ENCODE measurements at regions of chr4 and their contacts with region 1.

Region 1: DNA sequence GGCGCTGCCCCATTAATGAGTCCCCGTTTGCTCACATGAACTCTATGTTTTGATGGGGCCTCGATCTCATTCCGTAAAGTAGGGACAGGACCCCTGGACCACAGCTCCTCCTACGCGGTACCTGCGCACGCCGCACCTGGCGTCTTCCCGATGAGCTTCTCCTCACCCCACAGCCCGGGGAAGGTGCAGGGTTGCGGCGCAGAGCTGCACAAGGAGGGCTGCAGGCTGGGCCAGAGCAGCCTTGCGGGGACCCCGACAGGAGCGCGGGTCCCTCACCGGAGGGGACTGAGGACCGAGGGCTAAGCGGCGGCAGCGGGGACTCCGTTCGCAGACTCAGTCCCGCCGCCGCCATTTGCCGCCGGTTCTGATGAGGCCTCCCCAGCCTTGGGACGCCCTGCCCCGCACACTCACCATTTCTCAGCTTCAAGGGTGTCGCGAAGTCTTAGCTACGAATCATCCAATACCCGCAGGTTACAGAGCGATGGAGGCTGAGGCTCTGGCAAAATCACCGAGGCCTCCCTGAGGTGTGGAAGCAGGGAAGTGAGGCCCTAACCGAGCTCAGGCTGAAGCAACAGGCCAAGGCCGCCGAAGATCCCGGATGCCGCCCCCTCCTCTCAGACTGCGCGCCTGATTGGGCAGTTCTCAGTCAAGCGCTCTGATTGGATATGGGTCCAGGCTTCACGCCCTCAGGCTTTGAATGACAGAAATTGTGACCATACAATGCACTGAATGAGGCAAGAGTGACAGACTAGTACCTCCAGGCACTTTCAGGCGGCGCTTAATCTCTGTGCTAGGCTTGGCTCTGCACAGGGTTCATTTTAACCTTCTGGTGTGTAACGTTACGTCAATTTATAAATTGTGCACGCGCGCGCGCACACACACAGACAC is 25.1 kb downstream of the ZNF721 start:
- DNase-seq: peak; percentile 80
- ATAC-seq: peak; percentile 98
- H3K4me3 Mint-ChIP-seq: peak overlapping the region; percentile 99
- H3K27ac Mint-ChIP-seq: peak overlapping the region; percentile 99
- H3K4me1 Mint-ChIP-seq: peaks cover 37% of the 10 kb centered on the region
- H3K27me3 Mint-ChIP-seq: no peaks in the 10 kb centered on the region
- CTCF ChIP-seq: no peak

Region 2: GRCh38 chr4:498328-498904 is 24.6 kb after region 1 on chr4:
- CTCF ChIA-PET with region 1: no interaction called
- POLR2A ChIA-PET with region 1: interaction called, 20 read pairs
- intact Hi-C with region 1: loop called (anchors 1 kb)
- DNase-seq: no peak
- ATAC-seq: peak; percentile 25
- H3K4me3 Mint-ChIP-seq: peak overlapping the region; percentile 93
- H3K27ac Mint-ChIP-seq: peak overlapping the region; percentile 95
- H3K4me1 Mint-ChIP-seq: peaks cover 32% of the 10 kb centered on the region
- H3K27me3 Mint-ChIP-seq: no peaks in the 10 kb centered on the region
- CTCF ChIP-seq: no peak